MCF 10A (cell line): ENCODE measurements at regions of chr13 and their contacts with region 1.

Region 1: DNA sequence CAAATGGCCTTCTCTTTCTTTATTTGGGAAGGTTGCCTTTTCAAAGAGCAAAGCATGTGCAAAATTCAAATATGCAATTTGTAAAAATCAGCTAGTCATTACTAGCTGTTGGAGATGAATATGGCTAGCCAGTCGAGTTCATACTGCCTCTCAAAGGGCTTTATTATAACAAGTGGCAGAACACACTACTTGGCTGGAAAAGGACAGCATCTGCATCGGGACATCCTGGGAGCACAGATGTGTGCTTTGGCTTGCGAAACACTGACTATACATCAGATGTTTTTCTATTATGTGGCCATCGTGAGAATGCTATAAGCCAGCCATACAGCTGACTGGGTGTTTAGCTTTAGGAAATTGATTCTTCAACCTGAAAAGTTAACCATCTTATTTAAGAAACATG is 424.2 kb downstream of the KCTD12 start:
- DNase-seq: peak; percentile 13
- H3K4me3 Mint-ChIP-seq: no peak overlapping the region
- H3K27ac Mint-ChIP-seq: no peak overlapping the region
- H3K4me1 Mint-ChIP-seq: no peaks in the 10 kb centered on the region
- H3K27me3 Mint-ChIP-seq: no peaks in the 10 kb centered on the region
- CTCF ChIP-seq: no peak

Region 2: DNA sequence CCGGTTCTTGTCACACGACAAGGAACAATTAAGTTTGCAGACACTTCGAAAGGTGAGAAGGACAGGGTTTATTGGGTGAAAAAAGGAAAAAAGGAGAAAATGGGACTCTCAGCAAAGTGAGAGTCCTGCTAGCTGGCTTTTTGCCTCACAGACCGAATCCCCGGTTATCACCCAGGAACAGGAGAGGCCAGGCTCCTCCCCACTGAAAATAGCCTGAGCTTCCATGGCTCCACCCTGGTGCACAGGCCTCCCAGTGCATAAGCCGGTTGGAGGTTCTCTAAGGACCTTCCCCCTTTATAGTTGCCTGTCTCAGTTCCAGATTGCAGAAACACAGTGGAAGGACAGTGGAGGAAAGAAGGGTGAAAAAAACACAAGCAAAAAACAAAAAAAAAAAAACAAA is 147.5 kb before region 1 on chr13:
- CTCF ChIA-PET with region 1: no interaction called
- POLR2A ChIA-PET with region 1: no interaction called
- intact Hi-C with region 1: loop called (anchors 10 kb)
- DNase-seq: no peak
- H3K4me3 Mint-ChIP-seq: no peak overlapping the region
- H3K27ac Mint-ChIP-seq: no peak overlapping the region
- H3K4me1 Mint-ChIP-seq: no peaks in the 10 kb centered on the region
- H3K27me3 Mint-ChIP-seq: no peaks in the 10 kb centered on the region
- CTCF ChIP-seq: no peak